Left lung (tissue), 14 donors: ENCODE measurements at regions of chr16 and their contacts with region 1.

Region 1: GRCh38 chr16:70470927-70471341 is 16.5 kb downstream of the FCSK start:
- DNase-seq: peak in 2 of 4 donors; percentile 32 to 87
- ATAC-seq: peak; percentile 74
- H3K4me3 ChIP-seq: no peak overlapping the region
- H3K27ac ChIP-seq: no peak overlapping the region
- H3K4me1 ChIP-seq: no peaks in the 10 kb centered on the region
- H3K27me3 ChIP-seq: no peaks in the 10 kb centered on the region
- CTCF ChIP-seq: peak; percentile 20 to 36

Region 2: GRCh38 chr16:70395345-70395901 is 75.5 kb before region 1 on chr16:
- intact Hi-C with region 1: loop called in 1 of 2 experiments (anchors 10 kb)
- DNase-seq: peak in 3 of 4 donors; percentile 45 to 95 (median 80)
- ATAC-seq: peak; percentile 96
- H3K4me3 ChIP-seq: no peak overlapping the region
- H3K27ac ChIP-seq: no peak overlapping the region
- H3K4me1 ChIP-seq: peaks cover 0 to 14% of the 10 kb centered on the region in 2 donors
- H3K27me3 ChIP-seq: no peaks in the 10 kb centered on the region
- CTCF ChIP-seq: peak; percentile 68 to 84